BJ (cell line): ENCODE measurements at regions of chr11 and their contacts with region 1.

Region 1: DNA sequence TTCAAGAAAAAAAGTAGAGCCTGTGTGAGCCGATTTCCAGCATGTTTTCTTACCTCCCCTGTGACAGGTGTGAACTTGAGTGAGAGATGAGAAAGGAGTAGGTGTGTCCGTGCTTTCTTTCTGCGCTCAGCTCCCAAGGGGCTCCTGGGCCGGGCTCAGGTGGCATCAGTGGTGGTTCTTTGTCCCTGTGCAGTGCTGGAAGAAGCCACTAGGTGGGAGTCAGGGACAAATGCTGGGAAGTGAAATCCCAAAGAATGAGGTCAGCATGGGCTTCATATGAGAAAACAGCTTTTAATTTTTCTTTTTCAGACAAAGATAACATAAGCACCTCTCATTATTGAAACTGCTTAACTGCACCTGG is 57.8 kb downstream of the PPFIBP2 start:
- DNase-seq: no peak
- H3K4me3 ChIP-seq: no peak overlapping the region
- H3K27me3 ChIP-seq: no peaks in the 10 kb centered on the region
- CTCF ChIP-seq: peak; percentile 96

Region 2: DNA sequence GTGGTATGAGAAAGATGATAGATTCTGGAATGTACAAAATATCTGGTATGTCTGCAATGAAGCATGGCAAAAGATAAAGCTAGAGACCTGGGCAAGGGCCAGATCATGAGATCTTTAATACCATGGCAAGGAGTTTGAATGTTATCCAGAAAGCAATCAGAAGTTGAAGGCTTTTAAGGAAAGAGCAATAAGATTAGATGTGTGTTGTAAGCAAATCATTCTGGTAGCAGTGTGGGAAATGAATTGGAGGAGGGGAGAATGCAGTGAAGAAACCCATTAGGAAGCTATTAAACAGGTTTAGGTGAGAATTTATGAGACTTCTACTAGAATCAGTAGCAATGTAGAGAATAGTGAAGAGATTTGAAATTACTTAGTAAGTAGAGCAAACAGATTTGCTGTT is 352.1 kb before region 1 on chr11:
- CTCF ChIA-PET with region 1: no interaction called
- POLR2A ChIA-PET with region 1: no interaction called
- DNase-seq: no peak
- H3K4me3 ChIP-seq: no peak overlapping the region
- H3K27me3 ChIP-seq: no peaks in the 10 kb centered on the region
- CTCF ChIP-seq: no peak

Region 3: DNA sequence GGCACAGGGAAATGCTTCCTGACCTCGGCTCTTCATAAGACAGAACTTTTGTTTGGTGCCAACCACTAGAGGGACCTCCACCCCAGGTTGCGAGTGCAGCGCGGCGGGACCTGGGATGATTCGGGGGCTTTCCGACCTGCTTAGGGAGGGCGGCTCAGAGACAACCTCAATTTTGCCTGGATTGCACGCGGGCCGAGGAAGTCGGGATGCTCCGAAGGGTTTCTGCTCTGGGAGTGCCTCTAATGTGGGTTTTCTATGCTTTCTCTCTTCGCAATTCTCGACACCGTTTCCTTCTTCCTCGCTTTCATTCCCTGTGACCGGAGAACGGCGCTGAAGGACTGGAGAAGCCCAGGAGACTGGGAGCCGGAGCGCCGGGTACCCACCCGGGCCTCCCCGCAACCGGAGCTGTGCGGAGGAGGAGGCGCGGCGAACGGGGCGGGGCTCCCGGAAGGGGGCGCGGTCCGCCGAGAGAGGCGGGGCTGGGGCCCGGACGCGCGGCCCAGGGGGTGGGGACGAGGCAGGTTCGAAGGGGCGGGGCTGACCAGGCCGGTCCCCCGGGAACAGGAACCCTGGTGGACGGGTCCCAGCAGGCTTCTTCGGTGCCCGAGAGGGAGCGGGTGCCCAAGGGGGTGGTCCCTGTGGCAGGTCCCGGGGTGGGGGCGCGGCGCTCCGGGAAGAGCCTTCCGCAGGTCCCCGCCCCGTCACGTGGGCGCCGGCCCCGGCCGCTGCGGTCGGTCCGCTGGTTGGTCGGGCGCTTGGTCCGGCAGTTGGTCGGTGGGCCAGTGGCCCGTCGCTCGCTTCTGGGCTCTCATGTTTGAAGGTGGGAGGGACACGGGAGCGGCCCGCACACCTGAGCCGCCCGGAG is 58.2 kb before region 1 on chr11 and contains the start of gene PPFIBP2:
- CTCF ChIA-PET with region 1: interaction called, 48 read pairs
- POLR2A ChIA-PET with region 1: no interaction called
- DNase-seq: no peak
- H3K4me3 ChIP-seq: peak within 1 kb of the TSS; percentile 67
- H3K27me3 ChIP-seq: peaks cover 4% of the 10 kb centered on the region
- CTCF ChIP-seq: peak; percentile 76
- polyA plus RNA-seq, gene PPFIBP2: 20.6 and 29.9 TPM in 2 replicates

Region 4: DNA sequence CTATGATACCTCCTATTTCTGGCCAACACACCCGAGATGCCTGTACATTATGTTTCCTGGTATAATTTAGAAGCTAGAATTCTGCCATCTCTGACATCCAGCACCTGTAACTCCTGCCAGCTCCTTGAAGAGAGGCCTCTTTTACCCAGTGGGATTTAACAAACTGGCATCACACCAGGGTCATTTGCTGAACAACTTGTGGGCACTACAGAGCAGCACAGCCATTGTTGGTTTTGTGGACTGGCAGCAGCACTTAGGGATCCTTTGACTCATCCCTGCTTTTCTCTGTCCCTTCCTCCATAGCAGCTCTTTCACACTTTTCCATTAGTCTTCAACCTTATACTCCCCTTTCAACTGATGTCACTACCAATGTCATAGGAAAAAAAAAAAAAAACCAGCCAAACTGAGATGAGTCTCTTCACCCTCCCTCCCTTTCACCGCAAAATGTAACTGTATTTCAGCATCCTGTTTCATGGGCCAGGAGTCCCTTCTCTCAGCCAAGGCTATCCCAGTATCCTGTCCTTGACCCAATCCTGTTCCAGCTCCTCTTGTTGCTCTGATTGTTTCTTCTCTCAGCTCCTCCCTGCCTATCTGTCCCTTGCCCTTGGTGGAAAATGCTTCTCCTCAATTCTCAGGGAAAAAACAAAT is 10.8 kb after region 1 on chr11:
- CTCF ChIA-PET with region 1: interaction called, 27 read pairs
- POLR2A ChIA-PET with region 1: no interaction called
- DNase-seq: no peak
- H3K4me3 ChIP-seq: no peak overlapping the region
- H3K27me3 ChIP-seq: no peaks in the 10 kb centered on the region
- CTCF ChIP-seq: no peak

Region 5: DNA sequence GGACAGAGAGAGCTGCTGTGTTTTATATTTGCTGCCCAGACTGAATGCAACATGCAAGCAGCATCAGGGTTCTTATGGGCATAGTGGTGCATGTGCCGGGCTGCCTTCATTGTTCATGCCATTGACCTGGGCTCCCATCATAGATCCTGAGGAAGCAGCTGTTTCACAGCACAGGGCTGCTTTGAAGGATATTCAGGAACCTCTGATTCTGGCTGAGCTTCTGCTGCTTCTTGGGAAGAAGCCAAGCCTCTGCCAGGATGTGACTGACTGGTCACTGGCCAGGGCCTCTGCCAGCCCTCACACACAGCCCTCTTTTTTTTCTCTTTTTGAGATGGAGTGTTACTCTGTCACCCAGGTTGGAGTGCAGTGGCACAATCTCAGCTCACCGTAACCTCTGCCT is 58.4 kb after region 1 on chr11:
- CTCF ChIA-PET with region 1: interaction called, 13 read pairs
- POLR2A ChIA-PET with region 1: no interaction called
- DNase-seq: no peak
- H3K4me3 ChIP-seq: no peak overlapping the region
- H3K27me3 ChIP-seq: no peaks in the 10 kb centered on the region
- CTCF ChIP-seq: no peak

Region 6: GRCh38 chr11:7651140-7651551 is 79.5 kb after region 1 on chr11:
- CTCF ChIA-PET with region 1: interaction called, 121 read pairs
- POLR2A ChIA-PET with region 1: no interaction called
- DNase-seq: peak; percentile 18
- H3K4me3 ChIP-seq: no peak overlapping the region
- H3K27me3 ChIP-seq: no peaks in the 10 kb centered on the region
- CTCF ChIP-seq: no peak

Region 7: DNA sequence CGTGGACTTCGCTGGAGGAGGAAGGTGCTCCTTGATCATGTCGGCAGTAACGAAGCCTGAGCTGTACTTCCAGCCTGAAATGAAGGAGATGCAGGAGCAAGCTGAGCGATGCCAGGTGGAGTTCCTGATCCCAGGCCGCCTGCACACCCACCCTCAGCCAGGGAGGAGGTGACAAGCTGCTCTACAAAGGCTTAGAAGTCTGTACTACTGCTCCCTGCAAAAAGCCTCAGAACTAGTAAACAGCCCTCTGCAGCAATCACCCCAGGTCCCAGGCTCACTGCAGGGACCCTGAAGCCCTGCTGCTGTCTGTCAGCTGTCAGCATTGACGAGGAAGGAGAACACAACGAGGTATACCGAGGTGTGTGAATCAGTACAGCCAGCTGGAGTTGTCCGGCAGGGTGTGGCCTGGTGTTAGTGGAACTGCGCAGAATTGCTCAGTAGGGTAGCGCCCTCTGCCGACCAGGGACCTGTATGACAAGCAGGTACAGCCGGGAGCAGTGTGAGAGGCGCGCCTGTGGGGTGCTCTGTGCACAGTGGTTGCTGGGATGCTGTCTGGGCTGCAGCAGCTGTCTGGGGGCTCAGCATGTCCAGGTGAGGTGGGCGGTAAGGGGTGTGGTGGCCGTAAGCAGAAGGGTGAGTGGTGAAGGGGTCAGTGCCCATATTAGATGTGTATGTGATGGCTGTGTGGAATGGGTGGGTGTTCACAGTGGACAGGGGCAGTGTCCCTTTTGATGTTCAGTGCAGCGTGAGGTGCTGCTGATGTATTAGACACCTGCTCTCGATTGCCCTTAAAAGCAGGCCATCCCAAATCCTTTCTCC is 94.1 kb after region 1 on chr11:
- CTCF ChIA-PET with region 1: interaction called, 98 read pairs
- POLR2A ChIA-PET with region 1: no interaction called
- DNase-seq: no peak
- H3K4me3 ChIP-seq: no peak overlapping the region
- H3K27me3 ChIP-seq: no peaks in the 10 kb centered on the region
- CTCF ChIP-seq: peak; percentile 90